Mammary epithelial cell (primary cell): ENCODE measurements at regions of chr13 and their contacts with region 1.

Region 1: GRCh38 chr13:89688918-89689317 is 1658.6 kb upstream of the MIR17HG start:
- DNase-seq: no peak
- H3K4me3 ChIP-seq: no peak overlapping the region
- H3K27ac ChIP-seq: no peak overlapping the region
- H3K4me1 ChIP-seq: no peaks in the 10 kb centered on the region
- H3K27me3 ChIP-seq: no peaks in the 10 kb centered on the region
- CTCF ChIP-seq: no peak

Region 2: GRCh38 chr13:89455741-89456140 is 233.2 kb before region 1 on chr13:
- CTCF ChIA-PET with region 1: no interaction called
- dilution Hi-C with region 1: no loop called
- in situ Hi-C with region 1: no loop called
- intact Hi-C with region 1: no loop called
- DNase-seq: peak; percentile 93
- H3K4me3 ChIP-seq: no peak overlapping the region
- H3K27ac ChIP-seq: peak overlapping the region; percentile 83
- H3K4me1 ChIP-seq: peaks cover 35% of the 10 kb centered on the region
- H3K27me3 ChIP-seq: no peaks in the 10 kb centered on the region
- CTCF ChIP-seq: no peak

Region 3: GRCh38 chr13:89708013-89708412 is 19.1 kb after region 1 on chr13:
- CTCF ChIA-PET with region 1: interaction called, 21 read pairs
- dilution Hi-C with region 1: no loop called
- in situ Hi-C with region 1: no loop called
- intact Hi-C with region 1: no loop called
- DNase-seq: no peak
- H3K4me3 ChIP-seq: no peak overlapping the region
- H3K27ac ChIP-seq: no peak overlapping the region
- H3K4me1 ChIP-seq: no peaks in the 10 kb centered on the region
- H3K27me3 ChIP-seq: no peaks in the 10 kb centered on the region
- CTCF ChIP-seq: no peak

Region 4: GRCh38 chr13:89832827-89833226 is 143.9 kb after region 1 on chr13:
- CTCF ChIA-PET with region 1: no interaction called
- dilution Hi-C with region 1: no loop called
- in situ Hi-C with region 1: no loop called
- intact Hi-C with region 1: no loop called
- DNase-seq: no peak
- H3K4me3 ChIP-seq: no peak overlapping the region
- H3K27ac ChIP-seq: no peak overlapping the region
- H3K4me1 ChIP-seq: no peaks in the 10 kb centered on the region
- H3K27me3 ChIP-seq: no peaks in the 10 kb centered on the region
- CTCF ChIP-seq: no peak